Activated CD4-positive, alpha-beta T cell treated with anti-CD3 and anti-CD28 coated beads for 36 hours (primary cell): ENCODE measurements at regions of chr2 and their contacts with region 1.

Region 1: GRCh38 chr2:225002039-225002655 is 40.1 kb downstream of the DOCK10 start:
- DNase-seq: peak; percentile 76
- ATAC-seq: peak; percentile 72
- H3K4me3 Mint-ChIP-seq: peak overlapping the region; percentile 5
- H3K27ac Mint-ChIP-seq: peak overlapping the region; percentile 83
- H3K4me1 Mint-ChIP-seq: peaks cover 84% of the 10 kb centered on the region
- H3K27me3 Mint-ChIP-seq: no peaks in the 10 kb centered on the region

Region 2: GRCh38 chr2:224357098-224357901 is 644.8 kb before region 1 on chr2:
- CTCF ChIA-PET with region 1: no interaction called
- POLR2A ChIA-PET with region 1: no interaction called
- intact Hi-C with region 1: loop called in 1 of 2 experiments (anchors 10 kb)
- DNase-seq: peak; percentile 71
- ATAC-seq: peak; percentile 78
- H3K4me3 Mint-ChIP-seq: no peak overlapping the region
- H3K27ac Mint-ChIP-seq: no peak overlapping the region
- H3K4me1 Mint-ChIP-seq: no peaks in the 10 kb centered on the region
- H3K27me3 Mint-ChIP-seq: no peaks in the 10 kb centered on the region

Region 3: DNA sequence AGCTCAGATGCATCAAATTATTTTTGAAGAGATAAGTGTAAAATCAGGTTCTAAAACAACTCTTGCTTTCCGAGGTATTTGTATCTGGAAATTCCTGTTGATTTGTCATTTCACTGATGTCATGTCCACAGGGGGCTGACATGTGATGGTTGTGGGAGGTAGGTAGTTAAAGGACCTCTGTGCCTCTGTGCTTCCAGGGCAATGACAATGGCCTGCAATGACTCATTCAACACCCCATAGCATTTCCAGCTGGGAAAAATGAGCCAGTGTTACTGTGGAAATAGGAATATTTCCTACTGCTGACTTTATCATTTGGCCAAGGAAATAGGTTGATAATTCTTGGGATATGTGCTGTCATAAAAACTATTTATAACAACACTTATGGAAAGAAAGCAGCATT is 199.7 kb before region 1 on chr2:
- CTCF ChIA-PET with region 1: no interaction called
- POLR2A ChIA-PET with region 1: no interaction called
- intact Hi-C with region 1: loop called (anchors 5 to 10 kb)
- DNase-seq: no peak
- ATAC-seq: no peak
- H3K4me3 Mint-ChIP-seq: no peak overlapping the region
- H3K27ac Mint-ChIP-seq: no peak overlapping the region
- H3K4me1 Mint-ChIP-seq: no peaks in the 10 kb centered on the region
- H3K27me3 Mint-ChIP-seq: no peaks in the 10 kb centered on the region

Region 4: DNA sequence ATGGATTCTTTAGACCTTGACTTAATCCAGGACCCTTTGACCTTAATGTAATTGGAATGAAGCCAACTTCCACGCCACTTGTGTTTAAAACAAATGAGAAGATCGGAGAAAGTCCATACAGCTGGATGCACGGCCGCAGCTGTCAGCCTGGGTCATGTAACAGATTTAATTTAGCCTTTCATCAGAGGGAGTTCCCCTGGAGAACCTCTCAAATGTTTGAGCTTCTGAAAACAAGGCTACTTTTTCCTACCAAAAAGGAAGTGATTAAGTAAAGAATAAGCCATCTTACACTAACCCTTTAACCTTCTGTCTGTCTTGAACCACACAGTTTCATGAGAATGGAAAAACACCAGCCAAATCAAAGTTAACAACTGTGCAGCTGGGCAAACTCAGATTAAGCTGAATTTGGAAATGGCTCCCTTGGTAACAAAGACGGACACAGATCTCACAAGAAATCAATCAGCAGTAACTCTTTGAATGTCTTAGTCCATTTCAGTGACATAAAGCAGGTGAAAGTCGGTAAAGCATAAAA is 63.4 kb before region 1 on chr2:
- CTCF ChIA-PET with region 1: interaction called, 15 read pairs
- POLR2A ChIA-PET with region 1: no interaction called
- intact Hi-C with region 1: loop called in 1 of 2 experiments (anchors 2 kb)
- DNase-seq: peak; percentile 54
- ATAC-seq: peak; percentile 72
- H3K4me3 Mint-ChIP-seq: peak overlapping the region; percentile 68
- H3K27ac Mint-ChIP-seq: peak overlapping the region; percentile 92
- H3K4me1 Mint-ChIP-seq: peaks cover 85% of the 10 kb centered on the region
- H3K27me3 Mint-ChIP-seq: no peaks in the 10 kb centered on the region

Region 5: GRCh38 chr2:224982910-224983711 is 19.0 kb before region 1 on chr2:
- CTCF ChIA-PET with region 1: interaction called, 35 read pairs
- POLR2A ChIA-PET with region 1: no interaction called
- intact Hi-C with region 1: loop called in 1 of 2 experiments (anchors 2 kb)
- DNase-seq: peak; percentile 55
- ATAC-seq: peak; percentile 39
- H3K4me3 Mint-ChIP-seq: peak overlapping the region; percentile 34
- H3K27ac Mint-ChIP-seq: peak overlapping the region; percentile 92
- H3K4me1 Mint-ChIP-seq: peaks cover 78% of the 10 kb centered on the region
- H3K27me3 Mint-ChIP-seq: no peaks in the 10 kb centered on the region